Activated T-helper 1 cell treated with anti-CD3 and anti-CD28 coated beads, Interleukin-12 subunit alpha, Interleukin-12 subunit beta, Interleukin-2, Interleukin-4 antibody, amounts not matched to agents 30 ng/mL and 10 ng/mL and 1 ng/mL, durations not matched to agents 14 hours and 24 hours and 36 hours (primary cell): ENCODE measurements at regions of chr12 and their contacts with region 1.

Region 1: DNA sequence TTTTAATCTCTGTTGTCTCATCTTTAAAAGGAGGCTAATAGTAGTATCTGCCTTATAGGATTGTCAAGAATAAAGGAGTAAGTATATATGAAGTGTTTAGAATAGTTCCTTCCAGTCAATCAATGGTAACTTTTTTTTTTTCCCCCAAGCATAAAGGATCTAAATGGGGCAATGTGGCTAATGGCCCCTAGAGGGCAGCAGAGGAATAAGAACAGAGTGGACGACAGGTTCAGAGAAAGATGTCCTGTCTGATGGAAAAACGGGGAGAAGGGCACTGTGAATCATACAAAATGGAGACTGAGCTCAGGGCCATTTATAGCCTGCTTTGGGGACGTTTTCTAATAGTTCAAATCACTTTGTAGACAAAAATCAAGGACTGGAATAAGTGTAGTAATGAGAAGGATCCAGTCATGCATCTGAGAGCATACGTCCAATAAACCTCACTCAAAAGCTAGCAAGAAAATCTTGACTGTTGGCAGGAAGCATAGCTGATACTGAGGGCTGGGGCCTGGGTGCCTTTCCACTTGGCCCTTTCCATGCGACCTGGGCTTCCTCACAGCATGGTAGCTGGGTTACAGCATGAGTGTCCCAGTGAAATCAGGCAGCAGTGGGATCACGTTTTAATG is 51.3 kb downstream of the IFNG-AS1 start:
- DNase-seq: peak; percentile 56
- H3K4me3 Mint-ChIP-seq: peak overlapping the region; percentile 13
- H3K27ac Mint-ChIP-seq: peak overlapping the region; percentile 83
- H3K4me1 Mint-ChIP-seq: peaks cover 65% of the 10 kb centered on the region
- H3K27me3 Mint-ChIP-seq: no peaks in the 10 kb centered on the region

Region 2: DNA sequence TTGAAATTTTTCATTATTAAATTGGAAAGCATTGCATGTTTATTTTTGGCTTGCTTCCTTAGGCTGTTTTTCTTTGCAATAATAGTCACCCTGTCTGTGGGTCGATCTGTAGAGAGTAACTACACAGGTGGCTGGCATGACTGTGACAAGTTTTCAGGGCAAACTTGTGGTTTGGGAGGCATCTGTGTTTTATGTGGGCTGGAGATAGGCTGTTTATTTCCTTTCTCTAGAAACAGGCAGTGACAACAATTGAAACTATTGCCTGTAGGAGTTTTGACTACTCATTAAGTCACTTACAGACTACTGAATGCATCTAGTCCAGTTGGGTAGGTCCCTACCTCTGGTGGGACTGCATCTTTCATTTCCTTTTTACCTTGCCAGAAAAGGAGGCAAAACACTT is 236.4 kb before region 1 on chr12:
- intact Hi-C with region 1: loop called (anchors 2 kb)
- DNase-seq: peak; percentile 22
- H3K4me3 Mint-ChIP-seq: no peak overlapping the region
- H3K27ac Mint-ChIP-seq: no peak overlapping the region
- H3K4me1 Mint-ChIP-seq: peaks cover 13% of the 10 kb centered on the region
- H3K27me3 Mint-ChIP-seq: peaks cover 4% of the 10 kb centered on the region

Region 3: DNA sequence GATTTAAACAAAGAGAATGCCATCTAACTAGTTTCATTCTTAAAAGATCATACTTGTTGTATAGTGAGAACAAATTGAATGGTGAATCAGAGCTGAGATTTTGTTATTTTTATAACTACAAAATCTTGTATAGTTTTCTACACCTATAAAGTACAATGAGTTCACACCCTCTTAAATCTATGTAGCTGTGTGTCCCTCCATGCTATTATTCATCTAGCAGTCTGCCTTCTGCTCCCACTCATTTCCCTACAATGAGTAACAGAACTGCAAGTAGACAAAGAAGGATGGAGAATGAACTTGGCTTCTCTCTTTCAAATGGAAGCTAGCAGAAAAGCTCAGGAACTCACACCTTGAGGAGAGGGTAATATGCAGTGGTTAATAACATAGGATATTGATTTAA is 44.2 kb before region 1 on chr12:
- intact Hi-C with region 1: loop called (anchors 1 kb)
- DNase-seq: no peak
- H3K4me3 Mint-ChIP-seq: no peak overlapping the region
- H3K27ac Mint-ChIP-seq: peak overlapping the region; percentile 1
- H3K4me1 Mint-ChIP-seq: peaks cover 69% of the 10 kb centered on the region
- H3K27me3 Mint-ChIP-seq: no peaks in the 10 kb centered on the region

Region 4: GRCh38 chr12:68065687-68066086 is 25.1 kb after region 1 on chr12:
- intact Hi-C with region 1: loop called (anchors 2 kb)
- DNase-seq: no peak
- H3K4me3 Mint-ChIP-seq: no peak overlapping the region
- H3K27ac Mint-ChIP-seq: peak overlapping the region; percentile 36
- H3K4me1 Mint-ChIP-seq: peaks cover 32% of the 10 kb centered on the region
- H3K27me3 Mint-ChIP-seq: no peaks in the 10 kb centered on the region

Region 5: GRCh38 chr12:68137335-68137830 is 96.8 kb after region 1 on chr12:
- intact Hi-C with region 1: loop called (anchors 1 kb)
- DNase-seq: no peak
- H3K4me3 Mint-ChIP-seq: peak overlapping the region; percentile 61
- H3K27ac Mint-ChIP-seq: peak overlapping the region; percentile 91
- H3K4me1 Mint-ChIP-seq: peaks cover 75% of the 10 kb centered on the region
- H3K27me3 Mint-ChIP-seq: no peaks in the 10 kb centered on the region

Region 6: GRCh38 chr12:68223083-68223747 is 182.7 kb after region 1 on chr12:
- intact Hi-C with region 1: loop called (anchors 1 kb)
- DNase-seq: peak; percentile 68
- H3K4me3 Mint-ChIP-seq: peak overlapping the region; percentile 79
- H3K27ac Mint-ChIP-seq: peak overlapping the region; percentile 61
- H3K4me1 Mint-ChIP-seq: peaks cover 56% of the 10 kb centered on the region
- H3K27me3 Mint-ChIP-seq: no peaks in the 10 kb centered on the region

Region 7: DNA sequence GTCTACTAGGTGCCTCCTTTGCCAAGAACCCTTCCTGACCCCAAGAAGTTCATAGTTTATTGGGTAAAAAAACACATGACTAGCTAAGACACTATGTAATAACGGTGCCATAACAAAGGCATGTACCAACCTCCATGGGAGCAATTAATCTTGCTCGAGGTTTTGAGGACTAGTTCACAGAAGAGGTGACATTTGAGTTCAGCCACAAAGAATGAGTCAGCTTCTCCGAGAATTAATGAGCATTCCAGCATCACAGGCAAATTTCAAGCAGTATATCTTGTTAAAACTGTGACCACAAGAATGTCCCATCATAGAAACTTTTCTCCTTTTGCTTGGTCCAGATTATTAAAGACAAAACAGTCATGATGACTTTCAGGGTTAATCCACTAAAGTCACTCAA is 457.1 kb after region 1 on chr12:
- intact Hi-C with region 1: loop called (anchors 5 kb)
- DNase-seq: no peak
- H3K4me3 Mint-ChIP-seq: peak overlapping the region; percentile 66
- H3K27ac Mint-ChIP-seq: peak overlapping the region; percentile 94
- H3K4me1 Mint-ChIP-seq: peaks cover 40% of the 10 kb centered on the region
- H3K27me3 Mint-ChIP-seq: no peaks in the 10 kb centered on the region